Colonic mucosa (tissue), 4 donors: ENCODE measurements at regions of chr3 and their contacts with region 1.

Region 1: DNA sequence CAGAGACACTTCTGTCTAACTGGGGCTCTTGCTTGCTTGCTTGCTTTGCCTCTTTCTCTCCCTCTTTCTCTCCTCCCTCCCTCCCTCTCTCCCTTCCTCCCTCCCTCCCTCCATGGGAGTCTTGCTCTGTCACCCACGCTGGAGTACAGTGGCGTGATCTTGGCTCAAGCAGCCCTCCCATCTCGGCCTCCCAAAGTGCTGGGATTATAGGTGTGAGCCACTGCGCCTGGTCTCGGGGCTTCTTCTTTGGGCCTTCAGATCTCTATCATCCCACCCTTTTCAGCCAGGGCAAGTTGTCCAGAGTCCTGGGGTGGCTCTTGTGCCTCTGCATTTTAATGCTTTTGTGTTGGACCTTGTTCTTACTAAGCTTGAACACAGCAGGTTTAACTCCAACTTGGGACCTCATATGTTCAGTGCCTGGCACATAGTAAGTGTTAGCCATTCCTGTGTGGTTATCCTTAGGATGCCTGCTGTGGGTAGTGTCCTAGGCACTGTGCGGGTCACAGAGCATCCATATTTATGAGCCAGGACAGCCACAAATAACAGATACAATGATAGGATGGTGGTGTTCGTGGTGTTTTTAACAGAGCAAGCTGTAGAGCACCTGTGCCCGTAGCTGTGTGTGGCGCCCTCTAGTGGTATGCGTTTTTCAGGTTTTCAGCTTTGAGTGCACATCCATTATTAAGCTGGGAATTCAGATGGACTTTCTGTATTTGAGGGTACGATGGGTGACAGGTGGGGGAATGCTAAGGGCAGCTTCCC is 75.1 kb downstream of the CCK start:
- DNase-seq: peak; percentile 82
- H3K4me3 ChIP-seq: no peak overlapping the region
- H3K27ac ChIP-seq: no peak overlapping the region
- H3K4me1 ChIP-seq: no peaks in the 10 kb centered on the region
- H3K27me3 ChIP-seq: no peaks in the 10 kb centered on the region
- CTCF ChIP-seq: peak; percentile 74

Region 2: DNA sequence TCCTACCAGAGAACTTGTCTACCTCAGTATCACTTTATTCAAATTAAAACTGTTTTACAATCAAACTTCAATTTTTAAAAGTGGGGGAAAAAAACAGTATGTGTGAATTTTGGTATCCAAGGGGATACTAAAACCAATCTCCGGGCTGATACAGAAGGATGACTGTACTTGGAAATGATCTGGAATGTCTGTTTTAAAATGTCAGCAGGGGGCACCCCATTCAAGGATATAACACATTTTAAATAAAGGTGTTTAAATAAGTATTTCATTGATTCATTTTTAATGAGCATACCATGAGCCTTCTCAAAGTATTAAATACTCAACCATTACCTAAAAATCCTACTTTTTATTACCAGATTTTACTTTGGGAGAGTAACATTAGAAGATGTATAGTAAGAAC is 296.9 kb before region 1 on chr3:
- intact Hi-C with region 1: loop called (anchors 5 kb)
- DNase-seq: peak; percentile 37
- H3K4me3 ChIP-seq: no peak overlapping the region
- H3K27ac ChIP-seq: no peak overlapping the region
- H3K4me1 ChIP-seq: no peaks in the 10 kb centered on the region
- H3K27me3 ChIP-seq: no peaks in the 10 kb centered on the region
- CTCF ChIP-seq: peak; percentile 45

Region 3: DNA sequence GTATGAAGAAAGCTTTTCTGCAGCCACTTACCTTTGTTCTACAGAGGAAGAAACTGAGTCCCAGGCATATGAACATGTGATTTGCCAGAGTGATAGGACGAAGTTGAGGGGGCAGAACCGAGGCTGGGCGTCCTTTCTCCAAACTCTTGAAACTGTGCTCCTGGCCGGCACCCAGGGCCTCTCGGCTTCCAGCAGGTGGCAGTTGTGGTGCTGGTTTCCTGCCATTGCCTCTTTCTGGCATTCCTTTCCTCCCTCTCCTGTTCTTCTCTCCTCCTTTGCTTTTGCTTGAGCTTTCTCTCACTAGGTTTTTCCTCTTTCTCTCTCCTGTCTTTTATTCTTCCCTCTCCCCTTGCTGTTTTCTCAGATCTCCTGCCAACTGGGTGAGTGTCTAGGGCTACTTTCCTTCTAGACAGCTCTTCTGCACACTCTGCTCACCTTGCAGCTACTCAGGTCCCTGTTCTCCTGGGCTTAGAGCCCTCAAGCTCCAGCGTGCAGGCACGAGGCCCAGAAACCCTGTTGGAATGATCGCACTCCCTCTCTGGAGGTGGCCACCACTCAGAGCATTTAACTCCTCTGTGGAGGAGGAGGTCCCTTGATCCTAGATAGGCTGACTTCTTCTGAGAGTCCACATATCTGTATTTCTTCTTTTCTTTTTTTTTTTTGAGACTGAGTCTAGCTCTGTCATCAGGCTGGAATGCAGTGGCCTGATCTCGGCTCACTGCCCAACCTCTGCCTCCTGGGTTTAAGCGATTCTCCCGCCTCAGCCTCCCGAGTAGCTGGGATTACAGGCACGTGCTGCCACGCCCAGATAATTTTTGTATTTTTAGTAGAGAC is 73.5 kb before region 1 on chr3:
- intact Hi-C with region 1: loop called (anchors 1 kb)
- DNase-seq: no peak
- H3K4me3 ChIP-seq: no peak overlapping the region
- H3K27ac ChIP-seq: no peak overlapping the region
- H3K4me1 ChIP-seq: peaks cover 4% of the 10 kb centered on the region
- H3K27me3 ChIP-seq: no peaks in the 10 kb centered on the region
- CTCF ChIP-seq: peak; percentile 48